ENCODE measurements at regions of chr17 and their contacts with region 1.

Region 1: DNA sequence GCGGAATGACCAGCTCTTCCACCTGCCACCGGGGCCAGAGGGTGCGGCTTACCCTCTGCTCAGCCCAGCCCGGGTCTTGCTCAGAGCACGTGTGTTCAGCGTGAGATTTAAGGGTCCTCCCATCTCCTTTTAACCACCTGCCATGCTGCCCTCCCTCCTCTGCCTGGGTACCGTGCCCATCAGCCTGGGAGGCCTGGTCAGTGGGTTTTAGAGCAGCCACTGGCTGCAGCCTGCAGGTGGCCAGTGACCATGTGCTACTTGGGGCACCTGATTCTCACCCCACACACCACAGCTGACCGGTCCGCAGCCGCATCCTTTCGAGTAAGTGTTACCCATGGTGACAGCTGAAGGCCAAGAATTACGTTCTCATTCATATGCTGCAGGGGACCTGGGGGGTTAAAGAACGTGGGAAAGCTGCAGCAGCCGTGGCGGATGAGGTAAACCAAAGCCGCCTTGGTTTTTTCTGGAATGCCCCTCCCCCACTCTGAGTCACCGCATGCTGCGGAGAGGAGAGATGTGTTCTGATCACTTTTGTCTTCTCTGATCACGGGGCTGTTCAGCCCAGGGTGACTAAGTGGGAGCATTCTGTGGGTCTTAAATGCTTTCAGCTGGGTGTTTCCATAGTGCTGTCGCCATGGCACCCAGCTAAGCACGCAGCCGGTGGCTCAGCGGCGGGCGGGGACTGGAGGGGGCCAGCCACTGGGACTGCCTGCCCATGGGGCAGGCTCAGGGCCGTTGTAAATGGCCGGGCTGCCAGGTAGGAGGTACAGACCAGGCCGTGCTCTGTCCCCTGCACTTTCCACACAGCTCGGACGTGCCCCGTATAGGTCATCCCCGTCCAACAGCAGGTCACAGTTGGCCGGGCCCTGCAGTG is 59.8 kb downstream of the BAIAP2 start:
- DNase-seq: peak; percentile 97
- H3K4me3 Mint-ChIP-seq: no peak overlapping the region
- H3K27ac Mint-ChIP-seq: no peak overlapping the region
- H3K4me1 Mint-ChIP-seq: peaks cover 30% of the 10 kb centered on the region
- H3K27me3 Mint-ChIP-seq: no peaks in the 10 kb centered on the region

Region 2: GRCh38 chr17:80826955-80827645 is 267.6 kb before region 1 on chr17:
- CTCF ChIA-PET with region 1: no interaction called
- intact Hi-C with region 1: no loop called
- DNase-seq: peak; percentile 75
- H3K4me3 Mint-ChIP-seq: no peak overlapping the region
- H3K27ac Mint-ChIP-seq: peak overlapping the region; percentile 83
- H3K4me1 Mint-ChIP-seq: peaks cover 31% of the 10 kb centered on the region
- H3K27me3 Mint-ChIP-seq: no peaks in the 10 kb centered on the region

Region 3: DNA sequence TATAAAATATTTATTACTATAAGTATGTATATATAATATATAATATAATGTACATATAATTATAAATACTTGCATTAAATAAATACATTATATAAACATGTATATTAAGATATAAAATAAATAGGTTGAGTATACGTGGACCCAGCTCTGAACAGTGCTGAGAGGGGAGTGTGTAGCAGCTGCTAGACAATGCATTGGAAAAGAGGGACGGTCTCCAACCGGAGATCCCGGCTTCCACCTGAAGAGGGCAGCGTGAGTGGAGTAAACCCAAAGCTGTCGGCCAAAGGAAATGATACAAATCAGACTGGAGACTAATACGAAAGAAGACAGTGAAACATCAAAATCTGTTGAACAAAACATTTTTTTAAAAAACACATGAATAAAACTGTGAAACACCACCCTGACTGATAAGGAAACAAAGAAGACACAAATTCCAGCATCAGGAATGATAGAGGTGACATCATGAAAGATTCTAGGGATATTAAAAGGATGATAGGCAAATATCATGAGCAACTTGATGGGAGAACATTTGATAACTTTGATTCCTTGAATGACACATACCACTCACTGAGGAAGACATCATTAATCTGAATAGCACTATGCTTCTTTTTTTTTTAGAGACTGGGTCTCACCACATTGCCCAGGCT is 228.5 kb before region 1 on chr17:
- CTCF ChIA-PET with region 1: no interaction called
- intact Hi-C with region 1: no loop called
- DNase-seq: peak; percentile 87
- H3K4me3 Mint-ChIP-seq: no peak overlapping the region
- H3K27ac Mint-ChIP-seq: peak overlapping the region; percentile 88
- H3K4me1 Mint-ChIP-seq: peaks cover 81% of the 10 kb centered on the region
- H3K27me3 Mint-ChIP-seq: no peaks in the 10 kb centered on the region

Region 4: GRCh38 chr17:80991645-80992076 is 103.1 kb before region 1 on chr17 and contains the start of gene CHMP6:
- CTCF ChIA-PET with region 1: no interaction called
- intact Hi-C with region 1: loop called (anchors 1 kb)
- DNase-seq: peak; percentile 60
- H3K4me3 Mint-ChIP-seq: peak within 1 kb of the TSS; percentile 73
- H3K27ac Mint-ChIP-seq: peak within 1 kb of the TSS; percentile 65
- H3K4me1 Mint-ChIP-seq: peaks cover 12% of the 10 kb centered on the region
- H3K27me3 Mint-ChIP-seq: no peaks in the 10 kb centered on the region
- total RNA-seq, gene CHMP6: 10.1 to 10.6 TPM

Region 5: DNA sequence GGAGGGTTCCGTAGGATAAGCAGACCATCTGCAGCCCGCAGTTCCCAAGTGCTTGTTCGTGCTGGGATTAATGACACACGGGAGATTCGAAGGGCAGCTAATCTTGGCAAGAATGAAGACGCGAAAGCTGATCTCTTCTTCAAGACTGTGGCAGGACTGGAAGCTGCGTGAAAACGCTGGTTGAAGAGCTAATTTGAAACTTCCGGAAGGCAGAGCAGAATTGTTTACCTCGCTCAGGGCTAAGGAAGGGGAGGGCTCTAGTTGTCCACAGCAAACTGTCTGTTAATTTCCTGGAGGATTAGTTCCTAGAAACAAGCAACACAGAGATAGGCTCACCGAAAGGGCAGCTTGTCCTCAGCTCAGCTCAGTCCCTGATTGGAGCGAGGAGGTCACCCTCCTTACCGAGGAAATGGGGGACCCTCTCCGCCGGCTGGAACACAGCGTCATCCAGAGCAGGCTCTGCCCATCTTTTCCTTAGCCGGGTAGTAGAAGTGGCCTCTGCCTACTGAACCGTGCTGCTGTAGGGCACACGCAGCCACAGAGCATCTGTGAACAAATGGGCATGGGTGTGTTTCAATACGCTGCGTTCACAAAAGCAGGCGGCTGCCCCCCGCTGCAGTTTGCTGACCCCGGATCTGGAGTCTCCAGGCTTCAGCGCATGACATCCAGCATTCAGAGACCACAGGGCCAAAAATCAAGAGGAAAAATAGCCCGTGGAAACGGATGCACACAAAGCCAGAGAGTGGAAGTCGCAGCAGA is 76.5 kb before region 1 on chr17:
- CTCF ChIA-PET with region 1: interaction called, 10 read pairs
- intact Hi-C with region 1: no loop called
- DNase-seq: peak; percentile 60
- H3K4me3 Mint-ChIP-seq: peak overlapping the region; percentile 60
- H3K27ac Mint-ChIP-seq: peak overlapping the region; percentile 75
- H3K4me1 Mint-ChIP-seq: peaks cover 12% of the 10 kb centered on the region
- H3K27me3 Mint-ChIP-seq: no peaks in the 10 kb centered on the region

Region 6: GRCh38 chr17:81034779-81035388 is 59.9 kb before region 1 on chr17 and contains the start of gene BAIAP2:
- CTCF ChIA-PET with region 1: interaction called, 3 read pairs
- intact Hi-C with region 1: loop called (anchors 1 kb)
- DNase-seq: peak; percentile 95
- H3K4me3 Mint-ChIP-seq: peak within 1 kb of the TSS; percentile 85
- H3K27ac Mint-ChIP-seq: no peak within 1 kb of the TSS
- H3K4me1 Mint-ChIP-seq: peaks cover 15% of the 10 kb centered on the region
- H3K27me3 Mint-ChIP-seq: peaks cover 19% of the 10 kb centered on the region
- total RNA-seq, gene BAIAP2: 3.9 to 4.2 TPM

Region 7: GRCh38 chr17:81222906-81223761 is 128.4 kb after region 1 on chr17 and contains the start of gene CEP131:
- CTCF ChIA-PET with region 1: no interaction called
- intact Hi-C with region 1: loop called (anchors 1 kb)
- DNase-seq: peak; percentile 100
- H3K4me3 Mint-ChIP-seq: peak within 1 kb of the TSS; percentile 77
- H3K27ac Mint-ChIP-seq: peak within 1 kb of the TSS; percentile 13
- H3K4me1 Mint-ChIP-seq: peaks cover 16% of the 10 kb centered on the region
- H3K27me3 Mint-ChIP-seq: no peaks in the 10 kb centered on the region
- total RNA-seq, gene CEP131: 9.4 to 9.8 TPM